ENCODE measurements at regions of chr16 and their contacts with region 1.

Region 1: DNA sequence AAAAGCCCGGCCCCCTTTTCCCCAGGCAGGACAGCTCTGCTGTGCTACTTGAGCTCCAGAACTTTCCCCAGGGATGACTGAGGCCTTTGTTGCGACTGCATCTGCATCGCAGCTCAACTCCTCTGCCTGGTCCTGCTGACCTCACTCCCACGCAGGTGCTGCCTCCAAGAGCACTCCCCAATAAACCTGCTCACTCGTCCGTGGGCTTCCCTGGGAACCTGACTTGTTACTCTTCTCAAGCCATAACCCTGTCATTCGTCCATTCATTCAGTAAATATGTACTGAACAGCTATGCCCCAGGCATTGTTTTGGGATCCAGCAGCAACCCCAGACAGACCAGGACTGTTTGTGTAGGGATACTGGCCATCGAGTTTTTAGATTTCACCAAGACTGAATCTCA is 11.5 kb upstream of the RMI2 start:
- DNase-seq: no peak
- H3K4me3 ChIP-seq: no peak overlapping the region
- H3K27ac ChIP-seq: no peak overlapping the region
- H3K4me1 ChIP-seq: peaks cover 0 to 5% (median under 1%) of the 10 kb centered on the region in 4 experiments; a peak in 5 of 7 replicates
- H3K27me3 ChIP-seq: no peaks in the 10 kb centered on the region
- CTCF ChIP-seq: no peak
- EP300 ChIP-seq: no peak
- POLR2A ChIP-seq: no peak
- RAD21 ChIP-seq: no peak

Region 2: DNA sequence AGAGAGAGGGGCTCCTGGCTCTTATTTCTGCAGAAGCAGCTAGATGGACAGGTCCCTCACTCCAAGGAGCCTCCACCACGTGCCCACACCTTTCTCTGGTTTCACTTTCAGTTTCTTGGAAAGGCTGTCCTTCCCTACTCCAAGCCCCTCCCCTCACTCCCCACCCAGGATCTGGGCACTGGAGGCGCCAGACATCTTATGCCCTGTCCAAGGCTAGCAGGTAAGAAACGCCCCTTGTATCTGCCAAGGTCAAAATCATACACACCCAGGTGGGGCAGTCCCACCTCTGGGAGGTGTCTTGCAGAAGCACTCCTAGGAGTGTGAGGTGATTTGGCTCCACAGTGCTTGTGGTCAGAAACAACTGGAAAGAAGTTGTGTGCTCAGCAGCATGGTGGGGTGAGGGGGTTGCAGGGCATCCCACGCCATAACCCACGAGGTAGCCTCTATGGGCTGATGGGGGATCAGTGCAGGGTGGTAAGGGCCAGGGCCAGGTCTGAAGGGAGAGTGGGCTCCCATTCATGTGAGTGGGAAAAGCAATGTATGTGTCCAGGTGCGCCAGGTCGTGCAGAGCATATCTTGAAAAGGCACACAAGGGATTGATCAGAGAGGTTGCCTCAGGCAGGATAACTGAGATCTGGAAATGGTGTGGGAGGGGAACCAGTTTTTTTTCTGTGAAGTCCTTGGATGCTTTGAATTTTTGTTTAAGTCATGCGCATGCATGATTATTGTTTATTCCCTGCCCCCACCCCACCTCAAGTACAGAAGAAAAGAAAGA is 20.8 kb before region 1 on chr16:
- CTCF ChIA-PET with region 1: interaction called, 3 read pairs
- POLR2A ChIA-PET with region 1: interaction called, 29 read pairs
- DNase-seq: no peak
- H3K4me3 ChIP-seq: peak overlapping the region in 1 of 4 experiments; percentile 2; a peak in 1 of 8 replicates
- H3K27ac ChIP-seq: peak overlapping the region; percentile 61; the same call in 1 of the 2 replicates
- H3K4me1 ChIP-seq: peaks cover 26 to 45% (median 26%) of the 10 kb centered on the region in 4 experiments
- H3K27me3 ChIP-seq: no peaks in the 10 kb centered on the region
- CTCF ChIP-seq: no peak
- EP300 ChIP-seq: peak in 1 of 2 experiments; percentile 6; a peak in 1 of 3 replicates
- POLR2A ChIP-seq: no peak
- RAD21 ChIP-seq: no peak

Measured in H1 (cell line).